GM10248 (cell line): ENCODE measurements at regions of chr2 and their contacts with region 1.

Region 1: DNA sequence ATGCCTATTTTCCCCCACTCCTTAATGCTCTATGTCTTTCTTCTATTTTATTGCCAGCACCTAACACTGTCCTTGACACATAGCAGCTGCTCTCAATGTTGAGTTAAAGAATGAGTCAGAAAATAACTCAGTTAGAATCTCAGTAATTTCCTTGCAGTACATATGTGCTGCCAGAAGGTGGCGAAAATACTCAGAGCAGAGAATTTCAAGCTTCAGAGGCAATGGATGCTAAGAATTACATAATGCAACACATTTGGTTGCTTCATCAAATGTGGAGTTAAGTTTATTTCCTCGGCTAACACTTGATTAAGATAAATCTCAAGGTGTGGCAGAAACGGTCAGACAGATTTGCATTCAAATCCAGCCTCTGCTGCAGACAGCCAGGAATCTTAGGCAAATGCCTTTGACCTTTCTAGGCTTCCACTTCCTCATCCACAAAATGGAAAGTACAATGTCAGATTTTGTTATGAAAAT is 105.6 kb downstream of the VSNL1 start:
- DNase-seq: peak; percentile 66
- CTCF ChIP-seq: peak; percentile 85

Region 2: GRCh38 chr2:17401096-17401495 is 245.0 kb before region 1 on chr2:
- CTCF ChIA-PET with region 1: no interaction called
- POLR2A ChIA-PET with region 1: no interaction called
- DNase-seq: no peak
- CTCF ChIP-seq: no peak

Region 3: DNA sequence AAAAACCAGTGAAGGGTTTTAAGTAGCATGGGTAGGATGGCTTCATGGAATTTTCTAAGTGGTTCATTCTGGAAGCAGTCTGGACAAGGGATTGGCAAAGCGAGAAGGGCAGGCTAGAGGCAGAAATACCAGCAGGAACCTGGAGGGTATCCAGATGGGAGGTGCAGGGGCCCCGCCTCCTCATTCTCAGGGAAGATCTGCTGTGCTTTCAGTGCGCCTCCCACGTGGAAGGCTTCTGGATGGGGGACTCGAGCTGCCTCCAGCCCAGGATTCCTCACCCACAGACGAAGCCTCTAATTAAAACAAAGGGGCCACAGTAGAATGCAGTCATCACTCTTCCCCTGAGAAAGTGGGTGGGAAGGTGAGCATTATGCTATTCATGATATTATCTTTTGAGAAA is 25.8 kb before region 1 on chr2:
- CTCF ChIA-PET with region 1: interaction called, 14 read pairs
- POLR2A ChIA-PET with region 1: no interaction called
- DNase-seq: no peak
- CTCF ChIP-seq: no peak

Region 4: DNA sequence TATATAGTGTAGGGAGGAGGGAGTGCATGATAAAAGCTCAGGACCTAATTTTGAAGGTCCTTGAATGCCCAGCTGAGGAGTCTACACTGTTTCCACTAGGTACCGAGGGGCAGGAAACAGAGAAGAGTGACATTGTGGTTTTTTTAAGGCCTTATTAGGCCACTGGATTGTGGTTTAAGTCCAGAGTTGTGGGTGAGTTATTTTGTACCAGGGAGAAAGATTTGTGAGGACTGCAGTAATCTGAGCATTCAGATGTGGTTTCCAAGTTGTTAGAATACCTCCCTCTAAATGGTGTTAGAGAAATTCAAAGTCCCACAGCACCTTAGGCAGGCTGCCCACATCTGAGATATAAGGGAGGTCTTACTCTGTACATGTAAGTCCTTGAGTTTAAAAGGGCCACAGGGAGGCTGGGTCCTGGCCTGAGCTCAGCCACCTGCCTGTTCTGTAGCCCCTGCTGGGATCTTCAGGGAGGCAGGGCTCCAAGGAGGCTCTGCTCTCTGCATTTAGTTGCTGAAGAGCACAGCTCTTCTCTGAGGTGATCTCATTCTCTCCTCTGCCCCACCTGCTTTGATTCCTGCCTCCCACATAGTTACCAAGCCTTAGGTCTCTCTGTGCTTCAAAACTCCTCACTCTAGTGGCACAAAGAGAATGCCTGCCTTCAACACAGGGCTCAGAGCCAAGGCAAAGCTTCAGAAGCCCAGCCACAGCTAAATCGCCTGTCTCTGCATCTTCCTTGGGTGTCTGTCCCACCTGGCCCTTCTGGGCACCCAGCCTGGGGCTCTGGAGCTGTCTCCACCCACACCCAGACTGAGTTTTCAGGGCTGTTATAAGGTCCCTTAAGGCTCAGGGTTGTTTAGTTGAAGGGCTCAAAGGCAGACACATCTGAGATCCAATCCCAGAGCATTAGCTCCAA is 17.5 kb before region 1 on chr2:
- CTCF ChIA-PET with region 1: interaction called, 56 read pairs
- POLR2A ChIA-PET with region 1: no interaction called
- DNase-seq: no peak
- CTCF ChIP-seq: no peak

Region 5: DNA sequence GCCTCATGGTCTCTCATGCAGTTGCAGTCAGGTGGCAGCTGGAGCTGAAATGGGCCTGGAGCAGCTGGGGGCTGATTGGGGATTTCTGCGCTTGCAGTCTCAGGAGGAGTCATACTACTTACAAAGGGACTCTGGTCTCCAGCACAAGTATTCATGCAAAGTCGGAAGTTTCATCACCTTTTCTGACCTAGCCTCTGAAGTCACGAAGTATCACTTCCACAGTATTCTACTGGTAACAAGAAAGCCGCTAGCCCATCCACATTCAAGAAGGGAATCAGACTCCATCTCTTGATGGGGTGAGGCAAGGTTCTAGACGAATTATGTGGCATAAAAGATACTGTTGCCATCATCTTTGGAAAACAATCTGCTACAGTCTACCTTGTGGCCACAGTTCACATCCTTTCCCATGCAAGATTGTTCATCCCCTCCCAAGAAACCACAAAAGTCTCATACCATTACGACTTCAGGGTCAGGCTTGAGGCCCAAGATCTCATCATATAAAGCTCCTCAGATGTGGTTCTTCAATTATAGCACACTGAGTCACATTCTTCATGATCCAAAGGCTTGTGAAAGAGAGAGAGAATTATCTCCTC is 12.2 kb after region 1 on chr2:
- CTCF ChIA-PET with region 1: interaction called, 343 read pairs
- POLR2A ChIA-PET with region 1: interaction called, 3 read pairs
- DNase-seq: no peak
- CTCF ChIP-seq: no peak